Right ventricle myocardium inferior (tissue), 1 donor: ENCODE measurements at regions of chr1 and their contacts with region 1.

Region 1: GRCh38 chr1:17419626-17420328 is 19.7 kb downstream of the RCC2 start:
- DNase-seq: peak; percentile 88
- ATAC-seq: peak; percentile 79

Region 2: GRCh38 chr1:17439250-17440073 is 19.7 kb after region 1 on chr1 and contains the start of gene RCC2:
- intact Hi-C with region 1: loop called (anchors 1 kb)
- DNase-seq: peak; percentile 85
- ATAC-seq: peak; percentile 87
- total RNA-seq, gene RCC2: 12.7 TPM

Region 3: GRCh38 chr1:17485280-17485679 is 65.5 kb after region 1 on chr1:
- intact Hi-C with region 1: loop called (anchors 2 kb)
- DNase-seq: no peak
- ATAC-seq: no peak

Region 4: GRCh38 chr1:17617787-17618557 is 198.2 kb after region 1 on chr1:
- intact Hi-C with region 1: loop called (anchors 10 kb)
- DNase-seq: no peak
- ATAC-seq: peak; percentile 90

Region 5: DNA sequence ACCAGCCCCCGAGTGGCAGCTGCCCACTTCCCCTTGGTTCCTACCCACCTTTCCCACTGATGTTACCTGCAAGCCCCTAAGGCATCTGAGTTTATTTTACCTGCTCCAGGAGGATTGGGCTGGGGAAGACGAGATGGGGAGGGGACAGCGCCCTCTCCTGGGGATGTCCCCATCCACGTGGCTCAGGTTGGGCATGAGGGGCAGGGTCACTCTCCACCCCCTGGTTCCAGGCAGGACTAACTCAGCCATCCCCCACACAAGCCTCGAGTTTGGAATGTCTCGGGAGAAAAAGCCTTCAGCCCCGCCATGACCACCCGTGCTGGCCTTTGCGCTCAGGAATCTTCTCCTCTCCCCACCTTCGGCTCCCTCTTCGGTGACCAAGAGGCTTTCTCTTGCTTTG is 209.7 kb after region 1 on chr1:
- intact Hi-C with region 1: no loop called
- DNase-seq: no peak
- ATAC-seq: no peak

Region 6: DNA sequence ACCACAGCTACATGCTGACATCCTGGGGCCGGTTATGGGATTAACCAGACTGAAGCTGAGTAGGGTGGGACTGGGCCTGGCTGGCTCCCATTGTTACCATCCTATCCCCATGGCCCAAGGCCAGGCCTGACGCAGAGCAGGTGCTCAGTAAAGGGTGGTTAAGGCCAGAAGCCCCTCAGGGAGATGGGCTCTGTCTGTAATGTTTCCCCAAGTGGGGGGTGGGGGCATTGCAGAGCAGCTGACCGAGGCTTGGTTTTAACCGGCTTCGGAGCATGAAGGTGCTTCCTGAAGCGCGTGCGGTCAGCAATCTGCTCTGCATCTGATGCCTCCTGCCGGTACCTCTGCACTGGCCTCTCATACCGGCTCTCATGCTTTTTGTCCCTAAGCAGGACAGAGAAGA is 252.0 kb after region 1 on chr1:
- intact Hi-C with region 1: no loop called
- DNase-seq: no peak
- ATAC-seq: no peak